Activated CD8-positive, alpha-beta T cell treated with anti-CD3 and anti-CD28 coated beads for 36 hours (primary cell): ENCODE measurements at regions of chr13 and their contacts with region 1.

Region 1: GRCh38 chr13:101757446-101758039 is 305.1 kb downstream of the ITGBL1 start:
- DNase-seq: no peak
- ATAC-seq: no peak
- H3K4me3 Mint-ChIP-seq: no peak overlapping the region
- H3K27ac Mint-ChIP-seq: no peak overlapping the region
- H3K4me1 Mint-ChIP-seq: no peaks in the 10 kb centered on the region
- H3K27me3 Mint-ChIP-seq: peaks cover 12% of the 10 kb centered on the region
- CTCF ChIP-seq: peak; percentile 64

Region 2: DNA sequence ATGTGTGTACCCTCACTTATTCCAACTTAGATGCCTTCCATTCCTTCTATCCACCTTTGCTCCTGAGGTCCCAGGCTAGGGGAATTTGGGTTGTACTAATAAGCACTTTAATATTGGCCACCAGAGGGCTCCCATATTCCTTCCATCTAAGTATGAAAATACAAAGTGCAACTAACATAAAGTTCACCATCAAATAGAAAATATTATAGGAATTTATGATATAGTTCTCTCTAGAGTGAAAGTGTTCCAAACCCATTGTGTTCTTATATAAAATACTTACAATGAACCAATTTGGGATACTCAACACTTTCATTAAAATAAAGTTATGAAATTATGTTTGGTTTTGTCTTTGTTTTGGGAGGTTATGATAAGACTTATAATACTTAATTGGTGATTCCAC is 242.8 kb before region 1 on chr13:
- CTCF ChIA-PET with region 1: interaction called, 22 read pairs
- POLR2A ChIA-PET with region 1: no interaction called
- intact Hi-C with region 1: loop called (anchors 5 kb)
- DNase-seq: peak; percentile 44
- ATAC-seq: no peak
- H3K4me3 Mint-ChIP-seq: no peak overlapping the region
- H3K27ac Mint-ChIP-seq: no peak overlapping the region
- H3K4me1 Mint-ChIP-seq: peaks cover 6% of the 10 kb centered on the region
- H3K27me3 Mint-ChIP-seq: peaks cover 2% of the 10 kb centered on the region
- CTCF ChIP-seq: peak; percentile 70

Region 3: GRCh38 chr13:101579281-101579802 is 178.2 kb before region 1 on chr13:
- CTCF ChIA-PET with region 1: no interaction called
- POLR2A ChIA-PET with region 1: no interaction called
- intact Hi-C with region 1: no loop called
- DNase-seq: no peak
- ATAC-seq: no peak
- H3K4me3 Mint-ChIP-seq: no peak overlapping the region
- H3K27ac Mint-ChIP-seq: no peak overlapping the region
- H3K4me1 Mint-ChIP-seq: no peaks in the 10 kb centered on the region
- H3K27me3 Mint-ChIP-seq: peaks cover 9% of the 10 kb centered on the region
- CTCF ChIP-seq: no peak

Region 4: DNA sequence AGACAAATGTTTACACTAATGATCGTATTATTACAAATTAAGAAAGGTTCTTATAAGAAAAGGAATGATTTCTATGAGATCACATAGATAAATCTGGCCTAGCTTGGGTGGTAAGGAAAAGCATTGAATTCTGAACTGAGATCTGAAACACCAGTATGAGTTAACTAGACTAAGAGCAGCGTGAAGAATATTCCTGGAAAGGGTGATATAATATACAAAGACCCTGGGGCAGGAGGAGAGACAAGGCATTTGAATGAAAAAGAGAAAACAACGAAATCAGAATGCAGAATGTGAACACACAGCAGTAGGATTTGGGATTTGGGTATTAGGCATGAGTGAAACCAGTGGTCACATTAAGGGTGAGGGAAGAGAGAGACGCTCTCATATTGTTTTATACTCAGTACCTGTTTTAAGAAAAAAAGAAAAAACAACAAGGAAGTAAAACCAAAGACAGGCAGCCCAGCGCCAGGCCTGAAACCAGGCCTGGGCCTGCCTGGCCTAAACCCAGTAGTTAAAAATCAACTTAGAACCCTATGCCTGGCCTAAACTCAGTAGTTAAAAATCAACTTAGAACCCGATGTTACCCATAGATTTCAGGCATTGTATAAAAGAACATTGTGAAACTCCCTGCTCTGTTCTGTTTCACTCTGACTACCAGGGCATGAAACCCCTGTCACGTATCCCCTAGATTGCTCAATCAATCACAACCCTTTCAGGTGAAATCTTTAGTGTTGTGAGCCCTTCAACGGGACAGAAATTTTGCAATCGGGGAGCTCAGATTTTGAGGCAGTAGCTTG is 18.0 kb before region 1 on chr13:
- CTCF ChIA-PET with region 1: no interaction called
- POLR2A ChIA-PET with region 1: no interaction called
- intact Hi-C with region 1: no loop called
- DNase-seq: no peak
- ATAC-seq: no peak
- H3K4me3 Mint-ChIP-seq: no peak overlapping the region
- H3K27ac Mint-ChIP-seq: no peak overlapping the region
- H3K4me1 Mint-ChIP-seq: no peaks in the 10 kb centered on the region
- H3K27me3 Mint-ChIP-seq: peaks cover 4% of the 10 kb centered on the region
- CTCF ChIP-seq: no peak

Region 5: GRCh38 chr13:101942038-101942437 is 184.5 kb after region 1 on chr13:
- CTCF ChIA-PET with region 1: no interaction called
- POLR2A ChIA-PET with region 1: no interaction called
- intact Hi-C with region 1: no loop called
- DNase-seq: peak; percentile 21
- ATAC-seq: no peak
- H3K4me3 Mint-ChIP-seq: no peak overlapping the region
- H3K27ac Mint-ChIP-seq: no peak overlapping the region
- H3K4me1 Mint-ChIP-seq: no peaks in the 10 kb centered on the region
- H3K27me3 Mint-ChIP-seq: no peaks in the 10 kb centered on the region
- CTCF ChIP-seq: peak; percentile 23